Colonic mucosa (tissue), 4 donors: ENCODE measurements at regions of chr10 and their contacts with region 1.

Region 1: GRCh38 chr10:27742195-27743011 is 3.2 kb downstream of the MKX start:
- DNase-seq: peak; percentile 73
- H3K4me3 ChIP-seq: peak overlapping the region; percentile 47
- H3K27ac ChIP-seq: peak overlapping the region; percentile 10
- H3K4me1 ChIP-seq: peaks cover 4% of the 10 kb centered on the region
- H3K27me3 ChIP-seq: peaks cover 55% of the 10 kb centered on the region
- CTCF ChIP-seq: peak; percentile 85

Region 2: GRCh38 chr10:27542812-27543211 is 199.6 kb before region 1 on chr10:
- intact Hi-C with region 1: no loop called
- DNase-seq: no peak
- H3K4me3 ChIP-seq: no peak overlapping the region
- H3K27ac ChIP-seq: no peak overlapping the region
- H3K4me1 ChIP-seq: no peaks in the 10 kb centered on the region
- H3K27me3 ChIP-seq: no peaks in the 10 kb centered on the region
- CTCF ChIP-seq: no peak

Region 3: DNA sequence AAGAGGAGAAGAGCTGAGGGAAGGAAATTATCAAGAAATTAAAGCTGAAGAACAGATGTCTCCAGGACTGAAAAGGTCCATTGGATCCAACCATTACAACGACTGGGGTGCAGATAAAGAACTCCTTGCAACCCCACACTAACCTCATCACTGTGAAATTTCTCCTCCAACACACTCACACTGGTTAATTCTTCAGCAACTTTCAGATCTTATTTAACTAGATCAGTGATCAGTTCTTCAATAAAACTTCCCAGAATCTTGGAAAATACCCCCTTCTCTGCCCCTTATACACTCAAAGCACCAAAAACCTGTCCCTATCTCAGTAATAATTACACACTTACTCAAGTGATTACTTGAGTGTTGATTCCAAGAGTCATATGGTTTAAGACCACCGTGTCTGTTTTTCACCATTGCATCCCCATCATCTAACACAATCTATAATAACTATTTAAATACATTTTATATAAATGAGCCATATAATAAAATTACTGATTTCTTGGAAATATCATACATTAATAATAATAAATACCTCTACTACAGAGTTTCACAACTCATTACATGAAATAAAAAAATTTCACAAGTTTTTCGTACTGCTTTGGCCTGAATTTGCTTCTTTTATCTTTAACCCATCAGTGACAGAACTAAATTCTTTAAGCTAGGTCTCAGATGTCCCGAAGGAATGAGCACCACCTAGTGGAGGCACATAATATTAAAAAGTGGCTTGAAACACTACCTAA is 436.8 kb after region 1 on chr10:
- intact Hi-C with region 1: loop called (anchors 2 kb)
- DNase-seq: peak; percentile 38
- H3K4me3 ChIP-seq: no peak overlapping the region
- H3K27ac ChIP-seq: no peak overlapping the region
- H3K4me1 ChIP-seq: no peaks in the 10 kb centered on the region
- H3K27me3 ChIP-seq: no peaks in the 10 kb centered on the region
- CTCF ChIP-seq: peak; percentile 74

Region 4: GRCh38 chr10:28190196-28190595 is 447.8 kb after region 1 on chr10:
- intact Hi-C with region 1: loop called (anchors 5 kb)
- DNase-seq: no peak
- H3K4me3 ChIP-seq: no peak overlapping the region
- H3K27ac ChIP-seq: no peak overlapping the region
- H3K4me1 ChIP-seq: no peaks in the 10 kb centered on the region
- H3K27me3 ChIP-seq: no peaks in the 10 kb centered on the region
- CTCF ChIP-seq: no peak

Region 5: DNA sequence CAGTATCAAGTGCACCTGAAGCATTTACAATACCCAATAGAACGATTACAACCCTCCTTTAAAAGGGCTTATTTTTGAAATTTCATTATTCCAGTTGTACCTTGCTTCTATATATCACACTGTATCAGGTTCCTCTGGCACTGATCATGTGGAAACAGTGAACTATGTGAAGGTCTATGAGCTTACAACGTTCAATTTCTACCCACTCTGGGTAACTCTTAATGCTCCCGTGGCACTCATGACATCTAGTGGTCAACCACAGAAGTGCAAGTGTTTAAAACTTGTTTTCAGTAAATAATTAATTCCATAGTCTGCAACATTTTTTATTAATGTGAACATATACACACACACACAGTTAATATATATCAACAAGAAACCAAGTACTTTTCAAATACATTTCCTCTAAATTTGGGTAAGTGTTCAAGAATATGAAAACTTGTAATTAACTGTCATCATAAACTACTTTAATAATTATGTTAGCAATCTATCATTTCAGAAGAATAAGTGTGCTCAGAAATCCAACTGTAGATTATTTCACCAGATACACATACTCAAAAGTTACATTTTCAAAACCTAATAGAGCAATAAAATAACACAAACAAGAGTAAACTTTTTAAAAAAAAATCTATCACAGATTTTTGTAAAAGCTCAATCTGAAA is 499.5 kb after region 1 on chr10:
- intact Hi-C with region 1: loop called (anchors 10 kb)
- DNase-seq: no peak
- H3K4me3 ChIP-seq: no peak overlapping the region
- H3K27ac ChIP-seq: no peak overlapping the region
- H3K4me1 ChIP-seq: no peaks in the 10 kb centered on the region
- H3K27me3 ChIP-seq: no peaks in the 10 kb centered on the region
- CTCF ChIP-seq: peak; percentile 92

Region 6: DNA sequence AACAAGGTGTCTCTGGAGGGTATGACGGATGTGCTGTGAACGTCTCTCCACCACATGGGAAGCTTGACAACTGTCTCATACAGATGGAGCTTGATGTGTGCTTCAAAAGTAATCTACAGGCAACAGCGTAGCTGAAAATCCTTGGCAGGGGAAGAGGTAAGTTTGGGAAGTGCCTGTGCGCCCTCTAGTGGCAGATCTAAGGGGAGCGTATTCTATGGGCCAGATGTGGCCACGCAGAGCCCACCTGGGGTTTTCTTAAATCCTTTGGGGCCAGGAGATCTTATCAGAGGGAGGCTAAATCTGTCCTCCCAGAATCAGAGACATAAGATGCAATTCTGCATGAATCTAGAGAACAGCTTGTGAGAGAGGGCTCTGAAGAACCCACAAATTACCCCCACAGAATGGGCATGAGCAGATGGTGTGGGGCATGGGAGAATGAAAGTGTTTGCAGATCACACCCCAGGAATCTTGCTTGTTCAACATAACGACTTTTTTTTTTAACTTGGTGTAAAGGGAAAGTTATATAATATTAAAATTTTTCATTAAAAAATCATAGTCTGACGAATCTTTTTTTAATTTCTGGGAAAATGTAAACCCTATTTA is 651.7 kb after region 1 on chr10:
- intact Hi-C with region 1: loop called (anchors 10 kb)
- DNase-seq: peak; percentile 78
- H3K4me3 ChIP-seq: no peak overlapping the region
- H3K27ac ChIP-seq: no peak overlapping the region
- H3K4me1 ChIP-seq: no peaks in the 10 kb centered on the region
- H3K27me3 ChIP-seq: no peaks in the 10 kb centered on the region
- CTCF ChIP-seq: peak; percentile 92